H1 (cell line): ENCODE measurements at regions of chr12 and their contacts with region 1.

Region 1: GRCh38 chr12:113955109-113955970 is 10.8 kb downstream of the RBM19 start:
- DNase-seq: peak in 1 of 2 experiments; percentile 83
- H3K4me3 ChIP-seq: no peak overlapping the region
- H3K27ac ChIP-seq: no peak overlapping the region
- H3K4me1 ChIP-seq: no peaks in the 10 kb centered on the region
- H3K27me3 ChIP-seq: no peaks in the 10 kb centered on the region
- CTCF ChIP-seq: peak; percentile 85 to 90 (median 87)
- EP300 ChIP-seq: no peak
- POLR2A ChIP-seq: no peak
- RAD21 ChIP-seq: peak; percentile 13 to 45; a peak in 2 of 4 replicates

Region 2: DNA sequence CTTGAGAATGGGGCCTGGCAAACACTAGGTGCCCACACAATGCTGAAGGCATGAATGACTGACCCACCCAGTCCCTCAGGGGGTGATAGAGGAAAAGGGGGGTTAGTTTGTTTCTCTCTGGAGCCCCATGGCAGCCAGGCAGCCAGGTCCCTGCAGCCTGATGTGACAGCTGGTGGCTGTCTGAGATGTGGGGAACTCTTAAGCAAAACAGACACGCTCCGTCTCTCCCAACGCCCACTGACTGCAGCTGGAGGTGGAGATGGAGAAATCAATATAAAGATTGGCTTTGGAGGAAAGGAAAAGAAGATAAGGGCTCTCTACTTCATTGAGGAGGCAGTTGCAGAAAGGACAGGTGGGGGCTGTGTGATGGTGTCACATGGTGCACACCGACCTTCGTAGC is 242.9 kb before region 1 on chr12:
- CTCF ChIA-PET with region 1: no interaction called
- POLR2A ChIA-PET with region 1: no interaction called
- DNase-seq: no peak
- H3K4me3 ChIP-seq: no peak overlapping the region
- H3K27ac ChIP-seq: no peak overlapping the region
- H3K4me1 ChIP-seq: no peaks in the 10 kb centered on the region
- H3K27me3 ChIP-seq: no peaks in the 10 kb centered on the region
- CTCF ChIP-seq: no peak
- EP300 ChIP-seq: no peak
- POLR2A ChIP-seq: no peak
- RAD21 ChIP-seq: no peak

Region 3: DNA sequence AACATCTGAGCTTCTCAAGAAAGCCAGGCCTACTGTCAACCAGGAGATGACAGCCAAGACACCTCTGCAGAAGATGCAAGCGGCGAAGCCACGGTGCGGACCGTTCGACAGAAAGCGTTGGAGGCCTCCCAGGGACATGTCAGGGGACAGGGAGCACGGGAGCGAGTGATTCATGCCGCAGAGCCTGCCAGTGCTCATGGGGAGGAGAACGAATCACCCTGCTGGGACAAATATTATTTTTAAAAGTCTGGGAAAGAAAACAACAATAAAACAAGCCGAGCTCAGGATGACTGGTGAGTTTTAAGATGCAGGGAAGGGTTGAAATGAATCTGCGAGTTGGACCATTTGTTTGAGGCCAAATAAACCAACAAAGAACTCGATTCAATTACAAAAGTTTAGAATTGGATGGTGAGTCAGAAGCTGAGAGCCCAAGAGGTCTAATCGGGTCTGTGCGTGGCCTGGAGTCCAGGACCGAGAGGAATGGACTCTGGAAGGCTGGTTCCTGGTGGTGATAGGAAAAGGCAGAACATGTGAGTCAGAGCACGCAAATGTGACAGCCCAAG is 80.3 kb before region 1 on chr12:
- CTCF ChIA-PET with region 1: no interaction called
- POLR2A ChIA-PET with region 1: no interaction called
- DNase-seq: no peak
- H3K4me3 ChIP-seq: no peak overlapping the region
- H3K27ac ChIP-seq: no peak overlapping the region
- H3K4me1 ChIP-seq: no peaks in the 10 kb centered on the region; a peak in 1 of 7 replicates
- H3K27me3 ChIP-seq: no peaks in the 10 kb centered on the region
- CTCF ChIP-seq: no peak
- EP300 ChIP-seq: no peak
- POLR2A ChIP-seq: no peak
- RAD21 ChIP-seq: no peak

Region 4: DNA sequence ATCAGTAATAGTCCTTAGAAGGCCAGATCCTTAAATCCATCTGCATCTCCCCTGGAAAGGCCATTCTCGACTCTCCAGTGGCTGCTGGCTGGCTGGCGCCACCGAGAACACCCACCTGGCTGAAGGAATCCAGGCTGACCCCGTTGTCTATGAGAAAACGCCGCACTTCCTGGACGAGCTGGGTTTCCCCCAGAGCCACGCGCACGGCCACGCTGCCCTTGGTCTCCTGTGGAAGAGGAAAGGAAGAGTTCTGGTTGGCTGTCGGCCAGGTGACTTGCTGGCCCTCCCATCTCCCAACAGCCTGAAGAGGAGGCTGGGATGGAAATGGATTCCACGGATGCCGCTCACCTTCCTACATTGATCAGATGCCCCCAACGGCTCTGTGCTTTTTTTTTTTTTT is 13.1 kb before region 1 on chr12:
- CTCF ChIA-PET with region 1: interaction called, 15 read pairs
- POLR2A ChIA-PET with region 1: no interaction called
- DNase-seq: no peak
- H3K4me3 ChIP-seq: no peak overlapping the region
- H3K27ac ChIP-seq: no peak overlapping the region
- H3K4me1 ChIP-seq: no peaks in the 10 kb centered on the region
- H3K27me3 ChIP-seq: no peaks in the 10 kb centered on the region
- CTCF ChIP-seq: no peak
- EP300 ChIP-seq: no peak
- POLR2A ChIP-seq: no peak
- RAD21 ChIP-seq: no peak

Region 5: DNA sequence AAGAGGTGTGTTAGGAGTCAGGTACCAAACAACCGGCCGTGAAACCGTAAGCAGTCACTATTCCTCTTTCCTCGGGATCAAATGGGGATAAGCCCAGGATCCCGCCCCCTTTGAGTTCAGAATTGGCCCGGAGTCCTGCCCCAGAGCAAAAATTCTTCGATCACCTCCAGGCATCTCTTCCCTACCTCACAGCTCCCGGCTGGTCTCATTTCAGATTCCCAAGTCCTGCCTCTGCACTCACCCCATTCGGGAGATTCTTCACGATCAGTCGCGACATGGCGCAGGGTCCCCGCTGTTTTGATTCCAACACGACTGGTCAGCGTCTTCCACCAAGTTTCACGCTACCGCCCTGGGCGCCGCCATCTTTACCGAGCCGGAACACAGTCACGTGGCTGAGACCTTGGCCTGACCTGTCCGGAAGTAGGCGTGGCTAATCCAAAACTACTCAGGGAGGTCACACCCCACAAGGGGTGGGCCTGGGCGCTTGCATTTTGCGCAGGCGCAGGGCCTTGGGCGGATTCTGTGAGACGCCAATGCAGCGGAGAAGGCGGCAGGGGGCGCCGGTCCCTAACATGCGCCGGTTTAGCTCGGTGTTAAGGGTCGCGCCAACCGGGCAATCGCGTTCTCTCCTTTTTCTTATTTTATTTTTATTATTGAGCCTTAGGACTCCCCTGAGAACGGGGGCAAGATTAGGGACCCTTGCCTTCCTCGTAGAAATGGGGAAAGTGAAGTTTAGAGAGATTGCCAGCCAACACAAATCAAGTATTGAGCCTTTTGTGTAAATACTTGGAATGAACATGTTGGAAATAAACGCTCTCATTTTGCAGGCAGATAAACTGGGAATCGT is 10.8 kb after region 1 on chr12 and contains the start of gene RBM19:
- CTCF ChIA-PET with region 1: interaction called, 13 read pairs
- POLR2A ChIA-PET with region 1: interaction called, 3 read pairs
- DNase-seq: peak; percentile 93 to 98
- H3K4me3 ChIP-seq: peak within 1 kb of the TSS; percentile 73 to 93 (median 88)
- H3K27ac ChIP-seq: peak within 1 kb of the TSS; percentile 72; the same call in 1 of the 2 replicates
- H3K4me1 ChIP-seq: peaks cover 0 to 7% (median 2%) of the 10 kb centered on the region in 4 experiments; a peak in 3 of 7 replicates
- H3K27me3 ChIP-seq: no peaks in the 10 kb centered on the region
- CTCF ChIP-seq: peak; percentile 67 to 85 (median 82)
- EP300 ChIP-seq: no peak
- POLR2A ChIP-seq: peak; percentile 75 to 77
- RAD21 ChIP-seq: peak; percentile 61 to 68
- total RNA-seq, gene RBM19: 59.5 and 61.9 TPM in 2 replicates